ENCODE measurements at regions of chr17 and their contacts with region 1.

Region 1: GRCh38 chr17:47220531-47220999 is 11.4 kb downstream of the MYL4 start:
- DNase-seq: peak; percentile 49
- ATAC-seq: peak; percentile 89
- H3K4me3 Mint-ChIP-seq: no peak overlapping the region
- H3K27ac Mint-ChIP-seq: peak overlapping the region; percentile 71
- H3K4me1 Mint-ChIP-seq: peaks cover 42% of the 10 kb centered on the region
- H3K27me3 Mint-ChIP-seq: no peaks in the 10 kb centered on the region
- CTCF ChIP-seq: no peak

Region 2: GRCh38 chr17:47205419-47205963 is 15.1 kb before region 1 on chr17:
- CTCF ChIA-PET with region 1: interaction called, 6 read pairs
- POLR2A ChIA-PET with region 1: interaction called, 14 read pairs
- intact Hi-C with region 1: no loop called
- DNase-seq: peak; percentile 78
- ATAC-seq: peak; percentile 52
- H3K4me3 Mint-ChIP-seq: peak overlapping the region; percentile 49
- H3K27ac Mint-ChIP-seq: peak overlapping the region; percentile 92
- H3K4me1 Mint-ChIP-seq: peaks cover 48% of the 10 kb centered on the region
- H3K27me3 Mint-ChIP-seq: no peaks in the 10 kb centered on the region
- CTCF ChIP-seq: no peak

Region 3: DNA sequence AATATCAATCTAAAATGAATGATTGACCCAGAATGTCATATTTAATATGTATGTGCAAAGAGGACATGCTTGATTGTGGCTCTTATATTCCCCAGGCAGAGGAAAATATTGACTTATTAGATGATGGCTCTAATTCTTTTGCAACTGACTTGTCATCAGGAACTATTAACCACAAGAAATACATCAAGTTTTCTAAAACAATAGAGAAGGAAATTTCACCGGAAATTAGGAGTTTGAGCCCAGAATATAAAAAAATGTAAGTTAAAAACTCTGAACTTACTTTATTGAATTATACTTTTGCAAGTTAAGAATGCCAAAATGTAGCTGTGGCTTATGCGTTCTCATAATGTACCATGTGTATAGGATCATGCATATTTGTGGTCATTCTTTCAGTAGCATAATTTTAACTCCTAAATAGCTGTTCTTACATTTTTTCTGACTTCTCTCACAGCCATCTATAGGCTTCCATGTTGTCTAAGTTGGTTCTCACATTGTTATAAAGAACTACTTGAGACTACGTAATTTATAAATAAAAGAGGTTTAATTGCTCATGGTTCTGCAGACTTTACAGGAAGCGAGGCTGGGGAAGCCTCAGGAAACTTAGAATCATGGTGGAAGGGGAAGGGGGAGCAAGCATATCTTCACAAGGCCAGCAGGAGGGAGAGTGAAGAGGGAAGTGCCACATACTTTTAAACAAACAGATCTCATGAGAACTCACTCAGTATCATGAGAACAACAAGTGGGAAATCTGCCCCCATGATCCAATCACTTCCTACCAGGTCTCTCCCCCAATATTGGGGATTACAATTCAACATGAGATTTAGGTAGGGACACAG is 114.8 kb after region 1 on chr17:
- CTCF ChIA-PET with region 1: no interaction called
- POLR2A ChIA-PET with region 1: no interaction called
- intact Hi-C with region 1: no loop called
- DNase-seq: no peak
- ATAC-seq: no peak
- H3K4me3 Mint-ChIP-seq: no peak overlapping the region
- H3K27ac Mint-ChIP-seq: no peak overlapping the region
- H3K4me1 Mint-ChIP-seq: no peaks in the 10 kb centered on the region
- H3K27me3 Mint-ChIP-seq: no peaks in the 10 kb centered on the region
- CTCF ChIP-seq: no peak

Measured in activated CD8-positive, alpha-beta T cell treated with anti-CD3 and anti-CD28 coated beads for 36 hours (primary cell).